ENCODE measurements at regions of chrX and their contacts with region 1.

Region 1: GRCh38 chrX:153539171-153539978 is 21.9 kb downstream of the ATP2B3 start:
- DNase-seq: peak; percentile 50 to 70
- ATAC-seq: peak; percentile 77 to 97
- H3K4me3 ChIP-seq: no peak overlapping the region
- H3K27ac ChIP-seq: no peak overlapping the region
- H3K4me1 ChIP-seq: no peaks in the 10 kb centered on the region
- CTCF ChIP-seq: peak; percentile 84
- EP300 ChIP-seq: no peak
- POLR2A ChIP-seq: no peak
- RAD21 ChIP-seq: peak; percentile 71 to 75

Region 2: DNA sequence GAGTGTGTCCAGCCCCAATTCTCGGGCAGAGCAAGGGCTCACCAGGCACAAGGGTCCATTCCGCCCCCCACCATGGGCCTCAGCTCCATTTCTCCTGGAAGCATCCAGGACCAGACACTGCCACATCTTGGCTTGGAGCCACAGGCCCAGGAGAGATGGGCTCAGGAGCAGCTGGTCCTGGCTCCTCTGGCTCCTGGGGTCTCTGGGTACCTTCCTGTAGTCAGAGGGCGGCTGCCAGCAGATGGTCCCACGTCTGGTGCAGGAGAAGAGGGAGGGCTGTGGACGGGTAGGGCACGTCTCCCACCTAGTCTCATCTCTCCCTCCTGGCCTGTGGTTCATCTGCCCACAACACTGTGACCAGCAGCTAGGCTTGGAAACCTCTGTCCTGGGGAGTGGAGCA is 13.9 kb before region 1 on chrX:
- CTCF ChIA-PET with region 1: interaction called, 42 read pairs
- POLR2A ChIA-PET with region 1: no interaction called
- DNase-seq: no peak
- ATAC-seq: no peak
- H3K4me3 ChIP-seq: no peak overlapping the region
- H3K27ac ChIP-seq: no peak overlapping the region
- H3K4me1 ChIP-seq: peaks cover 8% of the 10 kb centered on the region
- CTCF ChIP-seq: no peak
- EP300 ChIP-seq: no peak
- POLR2A ChIP-seq: no peak
- RAD21 ChIP-seq: no peak

Region 3: DNA sequence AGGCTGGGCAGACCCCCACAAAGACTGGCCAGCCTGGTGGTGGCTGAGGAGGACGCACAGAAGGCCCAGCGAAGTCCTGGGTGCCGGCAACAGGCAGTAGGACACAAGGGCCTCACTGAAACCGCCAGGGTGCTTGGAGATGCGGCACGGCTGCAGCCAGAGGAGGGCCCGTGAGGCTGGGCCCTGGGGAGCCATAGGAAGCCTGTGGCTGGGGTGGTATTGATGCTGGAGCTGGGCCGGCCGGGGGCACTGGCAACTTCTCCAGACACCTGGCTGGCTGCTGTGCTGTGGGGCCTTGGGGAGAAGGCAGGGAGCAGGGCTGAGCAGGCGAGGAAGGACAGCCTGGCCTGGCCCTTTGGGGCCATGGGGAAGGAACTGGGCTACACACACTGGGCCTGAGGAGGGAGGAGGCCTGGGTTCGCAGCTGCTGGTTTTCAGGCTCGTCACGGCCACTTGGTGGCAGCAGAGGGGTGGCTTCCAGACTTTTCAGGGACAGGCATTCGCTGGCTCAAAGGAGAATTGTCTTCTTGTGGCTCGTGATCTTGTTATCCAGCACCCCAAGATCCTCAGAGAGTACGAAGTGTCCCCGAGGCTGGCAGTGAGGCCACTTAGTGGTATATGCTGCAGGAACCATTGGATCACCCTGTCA is 15.3 kb after region 1 on chrX:
- CTCF ChIA-PET with region 1: interaction called, 50 read pairs
- POLR2A ChIA-PET with region 1: no interaction called
- DNase-seq: peak; percentile 60 to 62
- ATAC-seq: peak; percentile 80 to 94
- H3K4me3 ChIP-seq: no peak overlapping the region
- H3K27ac ChIP-seq: no peak overlapping the region
- H3K4me1 ChIP-seq: no peaks in the 10 kb centered on the region
- CTCF ChIP-seq: peak; percentile 62
- EP300 ChIP-seq: no peak
- POLR2A ChIP-seq: no peak
- RAD21 ChIP-seq: peak; percentile 68 to 74

Region 4: DNA sequence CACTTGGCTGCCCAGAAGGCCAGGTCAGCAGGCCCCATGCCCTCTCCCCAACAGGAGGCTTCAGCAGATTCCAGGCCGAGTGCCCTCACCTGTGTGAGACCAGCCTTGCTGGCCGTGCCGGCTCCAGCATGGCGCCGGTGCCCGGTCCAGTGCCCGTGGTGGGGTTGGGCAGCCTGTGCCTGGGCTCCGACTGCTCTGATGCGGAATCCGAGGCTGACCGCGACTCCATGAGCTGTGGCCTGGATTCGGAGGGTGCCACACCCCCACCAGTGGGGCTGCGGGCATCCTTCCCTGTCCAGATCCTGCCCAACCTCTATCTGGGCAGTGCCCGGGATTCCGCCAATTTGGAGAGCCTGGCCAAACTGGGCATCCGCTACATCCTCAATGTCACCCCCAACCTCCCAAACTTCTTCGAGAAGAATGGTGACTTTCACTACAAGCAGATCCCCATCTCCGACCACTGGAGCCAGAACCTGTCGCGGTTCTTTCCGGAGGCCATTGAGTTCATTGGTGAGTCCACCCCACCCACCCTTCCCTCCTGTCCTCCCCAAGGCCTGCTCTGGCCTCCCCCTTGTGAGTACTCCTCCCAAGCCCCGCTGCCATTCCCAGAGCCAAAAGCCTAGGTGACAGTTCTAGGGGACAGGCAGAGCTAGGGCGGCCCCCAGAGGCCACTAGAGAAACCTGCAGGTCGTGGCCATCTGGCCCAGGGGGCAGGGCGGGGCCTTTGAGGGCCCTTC is 110.0 kb after region 1 on chrX:
- CTCF ChIA-PET with region 1: interaction called, 23 read pairs
- POLR2A ChIA-PET with region 1: no interaction called
- DNase-seq: peak; percentile 57 to 69
- ATAC-seq: peak; percentile 55 to 77; a peak in 5 of 6 replicates
- H3K4me3 ChIP-seq: no peak overlapping the region
- H3K27ac ChIP-seq: no peak overlapping the region
- H3K4me1 ChIP-seq: peaks cover 13% of the 10 kb centered on the region; the same call in 1 of the 3 replicates
- CTCF ChIP-seq: peak; percentile 31
- EP300 ChIP-seq: no peak
- POLR2A ChIP-seq: no peak
- RAD21 ChIP-seq: peak; percentile 58 to 65; a peak in 4 of 5 replicates

Region 5: GRCh38 chrX:153708415-153708814 is 169.0 kb after region 1 on chrX:
- CTCF ChIA-PET with region 1: interaction called, 13 read pairs
- POLR2A ChIA-PET with region 1: no interaction called
- DNase-seq: peak; percentile 73 to 81
- ATAC-seq: peak; percentile 90 to 93
- H3K4me3 ChIP-seq: no peak overlapping the region
- H3K27ac ChIP-seq: peak overlapping the region in 1 of 2 experiments; percentile 35; a peak in 2 of 6 replicates
- H3K4me1 ChIP-seq: peaks cover 11% of the 10 kb centered on the region; the same call in 2 of the 3 replicates
- CTCF ChIP-seq: peak; percentile 63
- EP300 ChIP-seq: no peak
- POLR2A ChIP-seq: no peak
- RAD21 ChIP-seq: peak; percentile 55 to 64

Measured in A549 (cell line).